SK-N-SH (cell line): ENCODE measurements at regions of chr19 and their contacts with region 1.

Region 1: DNA sequence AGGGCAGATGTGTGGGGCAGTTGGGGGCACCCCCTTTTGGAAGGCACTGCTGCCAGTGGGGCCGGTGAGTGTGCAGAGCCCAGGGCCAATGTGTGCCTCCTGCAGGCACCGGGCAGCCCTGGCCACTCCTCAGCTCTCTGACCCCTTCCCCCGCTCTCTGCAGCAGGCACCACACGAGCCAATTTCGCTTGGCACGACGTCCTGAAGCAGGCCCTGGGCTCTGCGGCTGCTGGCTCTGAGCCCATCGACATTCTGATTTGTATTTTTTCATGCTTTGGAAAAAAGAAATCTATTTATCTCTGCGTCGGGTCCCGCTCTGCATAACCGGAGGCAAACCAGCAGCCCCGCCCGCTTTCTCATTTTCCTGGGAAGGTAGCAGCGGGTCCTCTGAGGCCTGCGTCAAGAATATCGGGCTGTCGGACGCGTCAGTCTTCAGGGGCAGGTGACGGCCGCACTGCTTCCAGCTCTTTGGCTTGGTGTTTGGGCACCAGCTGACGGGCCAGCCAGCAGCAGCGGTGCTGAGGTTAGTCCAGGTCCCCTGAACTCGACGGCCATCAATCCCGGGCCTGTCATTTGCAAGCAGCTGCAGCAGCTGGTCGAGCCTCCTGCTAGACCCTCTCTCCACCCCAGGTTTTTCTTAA is 134.3 kb downstream of the KDM4B start:
- DNase-seq: peak; percentile 94
- H3K4me3 ChIP-seq: no peak overlapping the region
- H3K27ac ChIP-seq: peak overlapping the region in 1 of 2 experiments; percentile 85; a peak in 2 of 4 replicates
- H3K4me1 ChIP-seq: peaks cover 14 to 57% of the 10 kb centered on the region in 2 experiments
- H3K27me3 ChIP-seq: no peaks in the 10 kb centered on the region
- CTCF ChIP-seq: no peak
- EP300 ChIP-seq: peak in 1 of 2 experiments; percentile 76; a peak in 2 of 4 replicates
- RAD21 ChIP-seq: peak; percentile 40

Region 2: DNA sequence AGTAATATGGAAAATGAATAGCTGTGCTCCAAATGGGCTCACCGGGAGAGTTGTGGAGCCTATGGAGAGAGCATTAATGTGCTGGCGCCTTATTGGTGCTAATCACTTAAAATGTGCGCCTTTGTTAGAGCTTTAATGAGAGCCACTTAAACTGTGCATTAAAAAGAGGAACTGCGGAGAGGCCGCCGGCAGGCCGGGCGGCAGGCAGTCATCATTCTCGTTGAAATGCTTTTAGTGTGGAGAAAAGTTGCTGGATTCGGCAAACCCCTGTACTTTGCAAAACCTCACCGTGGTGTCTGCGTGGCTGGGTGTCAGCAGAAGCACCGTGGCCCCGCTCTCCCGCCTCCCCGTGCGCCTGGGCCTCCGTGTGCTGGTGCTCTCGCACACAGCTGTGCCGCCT is 28.8 kb before region 1 on chr19:
- CTCF ChIA-PET with region 1: no interaction called
- POLR2A ChIA-PET with region 1: no interaction called
- DNase-seq: no peak
- H3K4me3 ChIP-seq: no peak overlapping the region
- H3K27ac ChIP-seq: no peak overlapping the region
- H3K4me1 ChIP-seq: peaks cover 0 to 3% of the 10 kb centered on the region in 2 experiments; a peak in 2 of 4 replicates
- H3K27me3 ChIP-seq: no peaks in the 10 kb centered on the region
- CTCF ChIP-seq: no peak
- EP300 ChIP-seq: no peak
- RAD21 ChIP-seq: no peak

Region 3: DNA sequence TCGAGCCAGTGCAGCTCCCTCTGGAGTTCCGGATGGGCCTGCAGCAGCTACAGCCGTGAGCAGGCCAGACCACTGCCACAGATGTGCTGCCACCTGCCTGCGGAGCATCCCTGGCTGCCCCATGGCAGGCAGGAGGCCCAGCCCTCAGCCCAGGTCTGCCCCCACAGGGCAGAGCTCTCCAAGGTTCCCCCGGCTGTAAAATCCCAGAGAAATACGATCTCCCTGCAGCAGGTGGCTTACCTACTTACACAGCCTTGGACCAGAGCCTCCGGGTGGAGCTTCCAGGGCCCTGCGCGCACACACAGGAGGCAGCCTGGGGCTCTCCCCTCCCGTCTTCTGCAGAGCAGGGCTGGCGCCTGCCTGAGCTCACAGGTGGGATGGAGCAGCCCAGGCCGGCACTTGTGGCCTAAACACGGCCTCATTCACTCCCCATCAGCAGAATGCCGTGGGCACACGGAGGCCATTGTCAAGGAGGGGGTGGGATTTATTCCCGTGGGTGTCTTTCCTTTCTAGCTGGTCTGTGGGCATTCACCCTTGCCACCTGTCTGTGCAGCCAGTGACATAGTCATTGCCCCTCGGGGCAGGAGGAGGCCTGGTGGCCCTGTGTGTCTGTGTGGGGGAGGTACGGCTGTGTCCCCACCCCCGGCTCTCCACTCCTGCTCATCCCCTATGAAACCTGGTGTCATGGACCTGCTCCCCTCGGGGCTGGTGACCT is 16.3 kb before region 1 on chr19:
- CTCF ChIA-PET with region 1: interaction called, 12 read pairs
- POLR2A ChIA-PET with region 1: interaction called, 4 read pairs
- DNase-seq: peak; percentile 58
- H3K4me3 ChIP-seq: no peak overlapping the region
- H3K27ac ChIP-seq: peak overlapping the region in 1 of 2 experiments; percentile 34; a peak in 1 of 4 replicates
- H3K4me1 ChIP-seq: peaks cover under 1 to 32% of the 10 kb centered on the region in 2 experiments; a peak in 1 of 4 replicates
- H3K27me3 ChIP-seq: no peaks in the 10 kb centered on the region
- CTCF ChIP-seq: no peak
- EP300 ChIP-seq: no peak
- RAD21 ChIP-seq: no peak

Region 4: DNA sequence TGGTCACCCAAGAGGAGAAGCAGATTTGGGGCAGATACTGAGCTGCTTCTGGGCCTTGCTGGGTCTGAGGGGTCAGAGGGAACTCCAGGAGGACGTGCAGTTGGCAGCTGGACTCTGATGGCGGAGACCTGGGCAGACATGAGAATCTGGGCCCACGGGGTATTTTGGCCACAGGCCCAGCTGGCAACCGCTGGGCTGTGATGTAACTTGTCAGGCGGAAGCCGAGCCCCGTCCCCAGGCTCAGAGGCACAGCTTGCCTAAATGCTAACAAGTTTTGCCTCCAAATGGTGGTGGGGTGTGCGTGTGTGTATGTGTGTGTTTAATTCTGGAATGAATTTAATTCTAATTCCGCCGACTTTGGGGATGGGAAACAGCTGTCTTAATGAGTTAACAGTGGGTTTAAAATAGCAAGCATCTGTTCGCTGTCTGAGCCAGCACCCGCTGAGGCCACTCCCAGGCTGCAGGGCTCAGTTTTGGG is 363.7 kb after region 1 on chr19:
- CTCF ChIA-PET with region 1: no interaction called
- POLR2A ChIA-PET with region 1: no interaction called
- DNase-seq: peak; percentile 89
- H3K4me3 ChIP-seq: no peak overlapping the region
- H3K27ac ChIP-seq: no peak overlapping the region; a peak in 1 of 4 replicates
- H3K4me1 ChIP-seq: peaks cover 0 to 10% of the 10 kb centered on the region in 2 experiments; a peak in 1 of 4 replicates
- H3K27me3 ChIP-seq: no peaks in the 10 kb centered on the region
- CTCF ChIP-seq: no peak
- EP300 ChIP-seq: 0 out of 4 replicates have a peak, but pooled peaks of 1 of the 2 experiments have one; percentile 31
- RAD21 ChIP-seq: peak; percentile 19; the same call in 1 of the 2 replicates